Vagina (tissue), 2 donors: ENCODE measurements at regions of chr13 and their contacts with region 1.

Region 1: GRCh38 chr13:98445340-98446233 is 131.3 kb downstream of the STK24 start:
- DNase-seq: no peak
- H3K4me3 ChIP-seq: no peak overlapping the region
- H3K27ac ChIP-seq: peak overlapping the region; percentile 79
- H3K4me1 ChIP-seq: peaks cover 32% of the 10 kb centered on the region
- H3K27me3 ChIP-seq: no peaks in the 10 kb centered on the region
- CTCF ChIP-seq: peak; percentile 90 to 99 (median 95)
- POLR2A ChIP-seq: no peak

Region 2: GRCh38 chr13:98142380-98143156 is 303.0 kb before region 1 on chr13 and contains the start of gene FARP1:
- intact Hi-C with region 1: loop called (anchors 10 kb)
- DNase-seq: no peak
- H3K4me3 ChIP-seq: peak within 1 kb of the TSS; percentile 58 to 96
- H3K27ac ChIP-seq: peak within 1 kb of the TSS; percentile 74
- H3K4me1 ChIP-seq: peaks cover 23% of the 10 kb centered on the region
- H3K27me3 ChIP-seq: no peaks in the 10 kb centered on the region
- CTCF ChIP-seq: no peak
- POLR2A ChIP-seq: peak in 1 of 2 donors; percentile 29
- total RNA-seq, gene FARP1: 17.7 TPM

Region 3: GRCh38 chr13:98285317-98285716 is 160.3 kb before region 1 on chr13:
- intact Hi-C with region 1: no loop called
- DNase-seq: no peak
- H3K4me3 ChIP-seq: no peak overlapping the region
- H3K27ac ChIP-seq: no peak overlapping the region
- H3K4me1 ChIP-seq: no peaks in the 10 kb centered on the region
- H3K27me3 ChIP-seq: no peaks in the 10 kb centered on the region
- CTCF ChIP-seq: no peak
- POLR2A ChIP-seq: no peak

Region 4: DNA sequence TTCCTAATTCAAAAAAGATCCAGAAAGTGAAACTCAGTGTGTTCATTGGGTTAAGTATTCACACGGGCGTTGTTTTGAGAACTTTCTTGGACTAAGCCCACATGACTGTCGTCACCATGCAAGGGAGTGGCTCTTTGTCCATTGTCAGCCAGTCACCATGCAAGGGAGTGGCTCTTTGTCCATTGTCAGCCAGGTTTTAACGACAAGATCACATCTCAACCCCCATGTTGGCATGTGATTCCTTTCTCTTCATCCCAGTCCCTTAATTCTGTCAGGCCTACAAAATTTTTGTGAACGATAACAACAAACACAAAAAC is 212.6 kb after region 1 on chr13:
- intact Hi-C with region 1: loop called (anchors 5 kb)
- DNase-seq: no peak
- H3K4me3 ChIP-seq: peak overlapping the region in 1 of 2 donors; percentile 13
- H3K27ac ChIP-seq: peak overlapping the region; percentile 64
- H3K4me1 ChIP-seq: peaks cover 21% of the 10 kb centered on the region
- H3K27me3 ChIP-seq: no peaks in the 10 kb centered on the region
- CTCF ChIP-seq: no peak
- POLR2A ChIP-seq: no peak